Activated CD4-positive, alpha-beta memory T cell treated with anti-CD3 and anti-CD28 coated beads for 36 hours (primary cell): ENCODE measurements at regions of chr1 and their contacts with region 1.

Region 1: DNA sequence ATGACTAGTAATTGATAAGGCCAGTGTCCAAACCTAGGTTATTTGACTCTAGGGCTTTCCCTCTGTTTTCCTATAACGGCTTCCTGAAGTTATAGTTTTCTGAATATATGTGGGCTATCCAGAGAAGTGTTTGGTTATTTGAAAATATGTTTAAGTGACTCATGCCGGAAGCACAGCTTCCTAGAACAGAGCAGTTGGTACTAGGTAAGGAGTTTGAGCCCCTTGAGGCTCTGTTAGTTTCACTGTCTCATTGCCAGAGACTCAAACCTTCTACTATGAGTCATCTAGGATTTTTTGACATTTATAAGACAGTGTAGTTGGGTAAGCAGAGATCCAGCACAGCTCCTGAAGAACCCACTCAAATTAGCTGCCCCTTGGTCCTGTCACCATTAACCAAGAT is 27.1 kb upstream of the LEPR start:
- DNase-seq: peak; percentile 57
- H3K4me3 Mint-ChIP-seq: no peak overlapping the region
- H3K27ac Mint-ChIP-seq: peak overlapping the region; percentile 69
- H3K4me1 Mint-ChIP-seq: peaks cover 57% of the 10 kb centered on the region
- H3K27me3 Mint-ChIP-seq: no peaks in the 10 kb centered on the region

Region 2: GRCh38 chr1:65209005-65209885 is 184.1 kb before region 1 on chr1:
- CTCF ChIA-PET with region 1: no interaction called
- POLR2A ChIA-PET with region 1: no interaction called
- intact Hi-C with region 1: loop called (anchors 5 kb)
- DNase-seq: no peak
- H3K4me3 Mint-ChIP-seq: no peak overlapping the region
- H3K27ac Mint-ChIP-seq: no peak overlapping the region
- H3K4me1 Mint-ChIP-seq: peaks cover 14% of the 10 kb centered on the region
- H3K27me3 Mint-ChIP-seq: peaks cover 3% of the 10 kb centered on the region

Region 3: DNA sequence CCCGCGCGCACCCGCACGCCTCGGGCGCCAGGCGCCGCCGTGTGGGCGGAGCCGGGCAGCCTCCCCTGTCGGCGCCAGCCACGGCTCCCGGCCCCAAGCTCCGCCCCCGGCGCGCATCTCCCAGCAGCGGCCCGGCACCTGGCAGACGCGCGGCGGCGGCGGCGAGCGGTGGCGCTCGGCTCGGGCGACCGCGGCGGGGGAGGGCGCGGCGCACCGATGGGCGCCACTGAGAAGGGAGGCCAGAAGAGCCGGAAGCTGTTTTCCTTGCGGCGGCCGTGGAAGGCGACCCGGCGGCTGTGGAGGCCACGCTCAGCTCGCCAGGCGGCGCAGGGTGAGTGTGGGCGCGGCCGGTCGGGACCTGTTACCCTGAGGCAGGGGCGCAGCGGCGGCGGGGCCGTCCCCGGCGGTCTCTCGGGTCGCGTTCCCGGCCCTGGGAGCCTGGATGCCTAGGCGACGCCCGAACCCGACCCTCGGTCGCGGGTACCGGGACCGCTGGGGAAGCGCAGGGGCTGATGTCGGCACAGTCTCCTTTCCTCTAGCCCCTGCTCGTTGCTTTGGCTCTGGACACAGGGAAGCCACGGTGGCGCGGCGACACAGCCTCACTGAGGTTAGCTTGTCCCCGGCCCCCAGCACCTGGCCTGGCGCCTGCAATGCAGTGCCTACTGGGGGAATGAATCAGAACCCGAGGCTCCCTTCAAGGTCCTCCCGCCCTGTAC is 138.9 kb before region 1 on chr1:
- CTCF ChIA-PET with region 1: interaction called, 3 read pairs
- POLR2A ChIA-PET with region 1: no interaction called
- intact Hi-C with region 1: loop called (anchors 1 kb)
- DNase-seq: peak; percentile 89
- H3K4me3 Mint-ChIP-seq: peak overlapping the region; percentile 84
- H3K27ac Mint-ChIP-seq: no peak overlapping the region
- H3K4me1 Mint-ChIP-seq: peaks cover 16% of the 10 kb centered on the region
- H3K27me3 Mint-ChIP-seq: peaks cover 10% of the 10 kb centered on the region

Region 4: DNA sequence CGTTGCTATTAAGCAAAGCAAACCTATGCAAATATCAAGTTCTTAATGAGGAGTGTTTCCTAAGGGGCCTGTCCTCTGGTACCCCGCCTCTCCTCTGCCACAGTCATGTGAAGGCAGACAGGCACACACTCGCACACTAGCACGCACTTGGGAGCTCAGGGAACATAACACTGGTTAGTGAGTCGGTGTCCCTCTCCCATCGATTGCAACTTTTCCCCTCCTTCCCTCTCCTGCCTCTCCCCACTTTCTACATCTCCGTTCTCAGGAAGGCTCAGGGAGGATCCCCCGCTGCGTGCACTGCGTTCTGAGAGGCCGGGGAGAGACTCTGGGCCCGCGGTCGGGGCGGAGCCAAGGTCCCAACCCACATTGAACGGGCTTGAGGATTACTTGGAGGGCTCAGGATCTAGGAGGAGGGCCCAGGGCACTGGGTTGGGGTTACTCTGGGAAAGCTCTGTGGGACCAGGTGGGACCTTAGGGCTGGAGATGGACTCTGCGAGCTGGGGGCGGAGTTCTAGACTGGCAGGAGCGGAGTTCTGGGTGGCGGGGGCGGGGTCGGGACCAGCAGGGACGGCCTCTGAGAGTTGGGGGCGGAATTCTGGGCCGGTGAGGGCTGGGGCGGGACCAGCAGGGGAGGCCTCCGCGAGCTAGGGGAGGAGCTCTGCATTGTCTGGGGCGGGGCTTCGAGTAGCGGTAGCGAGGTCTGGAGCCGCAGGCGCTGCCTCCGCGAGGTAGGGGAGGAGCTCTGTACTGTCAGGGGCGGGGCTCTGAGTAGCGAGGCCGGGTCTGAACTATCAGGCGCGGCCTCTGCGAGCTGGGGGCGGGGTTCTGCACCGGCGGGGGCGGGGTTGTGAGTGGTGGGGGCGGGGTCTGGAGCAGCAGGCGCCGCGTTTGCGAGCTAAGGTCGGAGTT is 26.6 kb after region 1 on chr1:
- CTCF ChIA-PET with region 1: interaction called, 13 read pairs
- POLR2A ChIA-PET with region 1: interaction called, 18 read pairs
- intact Hi-C with region 1: loop called (anchors 1 kb)
- DNase-seq: peak; percentile 99
- H3K4me3 Mint-ChIP-seq: peak overlapping the region; percentile 90
- H3K27ac Mint-ChIP-seq: peak overlapping the region; percentile 88
- H3K4me1 Mint-ChIP-seq: peaks cover 21% of the 10 kb centered on the region
- H3K27me3 Mint-ChIP-seq: no peaks in the 10 kb centered on the region

Region 5: DNA sequence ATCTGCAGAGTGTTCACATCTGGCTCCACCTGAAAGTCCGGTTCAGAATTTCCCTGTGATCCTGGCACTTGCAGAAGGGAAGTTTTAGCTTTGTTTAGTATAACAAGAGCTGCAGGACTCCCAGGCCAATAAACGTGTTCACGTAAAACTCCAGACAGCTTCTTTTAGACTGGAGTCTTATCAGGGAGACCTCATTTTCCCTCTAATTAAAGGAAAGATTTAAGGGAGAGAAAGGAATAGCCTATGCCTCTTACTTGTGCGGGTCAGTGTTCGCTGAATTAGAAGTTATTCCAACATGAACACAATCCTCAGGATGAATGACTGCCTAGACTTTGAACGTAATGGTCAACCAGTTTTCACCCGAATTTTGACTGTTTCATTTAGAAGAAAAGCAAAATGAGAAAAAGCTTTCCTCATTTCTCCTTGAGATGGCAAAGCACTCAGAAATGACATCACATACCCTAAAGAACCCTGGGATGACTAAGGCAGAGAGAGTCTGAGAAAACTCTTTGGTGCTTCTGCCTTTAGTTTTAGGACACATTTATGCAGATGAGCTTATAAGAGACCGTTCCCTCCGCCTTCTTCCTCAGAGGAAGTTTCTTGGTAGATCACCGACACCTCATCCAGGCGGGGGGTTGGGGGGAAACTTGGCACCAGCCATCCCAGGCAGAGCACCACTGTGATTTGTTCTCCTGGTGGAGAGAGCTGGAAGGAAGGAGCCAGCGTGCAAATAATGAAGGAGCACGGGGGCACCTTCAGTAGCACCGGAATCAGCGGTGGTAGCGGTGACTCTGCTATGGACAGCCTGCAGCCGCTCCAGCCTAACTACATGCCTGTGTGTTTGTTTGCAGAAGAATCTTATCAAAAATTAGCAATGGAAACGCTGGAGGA is 938.6 kb after region 1 on chr1:
- CTCF ChIA-PET with region 1: no interaction called
- POLR2A ChIA-PET with region 1: no interaction called
- intact Hi-C with region 1: loop called (anchors 10 kb)
- DNase-seq: peak; percentile 75
- H3K4me3 Mint-ChIP-seq: peak overlapping the region; percentile 93
- H3K27ac Mint-ChIP-seq: peak overlapping the region; percentile 96
- H3K4me1 Mint-ChIP-seq: peaks cover 48% of the 10 kb centered on the region
- H3K27me3 Mint-ChIP-seq: no peaks in the 10 kb centered on the region